GM12878 (cell line): ENCODE measurements at regions of chr21 and their contacts with region 1.

Region 1: GRCh38 chr21:22409571-22409970 is 1411.4 kb downstream of the NCAM2 start:
- DNase-seq: no peak
- ATAC-seq: no peak
- H3K4me3 ChIP-seq: no peak overlapping the region
- H3K27ac ChIP-seq: no peak overlapping the region
- H3K4me1 ChIP-seq: no peaks in the 10 kb centered on the region
- H3K27me3 ChIP-seq: no peaks in the 10 kb centered on the region
- CTCF ChIP-seq: no peak
- EP300 ChIP-seq: no peak
- POLR2A ChIP-seq: no peak
- RAD21 ChIP-seq: no peak

Region 2: GRCh38 chr21:22363504-22363903 is 46.1 kb before region 1 on chr21:
- CTCF ChIA-PET with region 1: no interaction called
- POLR2A ChIA-PET with region 1: no interaction called
- RAD21 ChIA-PET with region 1: no interaction called
- SMC1A ChIA-PET with region 1: no interaction called
- in situ Hi-C with region 1: no loop called
- intact Hi-C with region 1: loop called (anchors 5 kb)
- DNase-seq: no peak
- ATAC-seq: no peak
- H3K4me3 ChIP-seq: no peak overlapping the region
- H3K27ac ChIP-seq: no peak overlapping the region
- H3K4me1 ChIP-seq: no peaks in the 10 kb centered on the region
- H3K27me3 ChIP-seq: no peaks in the 10 kb centered on the region
- CTCF ChIP-seq: no peak
- EP300 ChIP-seq: no peak
- POLR2A ChIP-seq: no peak
- RAD21 ChIP-seq: no peak

Region 3: GRCh38 chr21:22468893-22469292 is 59.3 kb after region 1 on chr21:
- CTCF ChIA-PET with region 1: no interaction called
- POLR2A ChIA-PET with region 1: no interaction called
- RAD21 ChIA-PET with region 1: no interaction called
- SMC1A ChIA-PET with region 1: no interaction called
- in situ Hi-C with region 1: no loop called
- intact Hi-C with region 1: no loop called
- DNase-seq: no peak
- ATAC-seq: no peak
- H3K4me3 ChIP-seq: no peak overlapping the region
- H3K27ac ChIP-seq: no peak overlapping the region
- H3K4me1 ChIP-seq: no peaks in the 10 kb centered on the region
- H3K27me3 ChIP-seq: no peaks in the 10 kb centered on the region
- CTCF ChIP-seq: no peak
- EP300 ChIP-seq: no peak
- POLR2A ChIP-seq: no peak
- RAD21 ChIP-seq: no peak